ENCODE measurements at regions of chr10 and their contacts with region 1.

Region 1: GRCh38 chr10:52627279-52627678 is 145.3 kb downstream of the MBL2 start:
- DNase-seq: no peak
- H3K4me3 ChIP-seq: no peak overlapping the region
- CTCF ChIP-seq: no peak

Region 2: DNA sequence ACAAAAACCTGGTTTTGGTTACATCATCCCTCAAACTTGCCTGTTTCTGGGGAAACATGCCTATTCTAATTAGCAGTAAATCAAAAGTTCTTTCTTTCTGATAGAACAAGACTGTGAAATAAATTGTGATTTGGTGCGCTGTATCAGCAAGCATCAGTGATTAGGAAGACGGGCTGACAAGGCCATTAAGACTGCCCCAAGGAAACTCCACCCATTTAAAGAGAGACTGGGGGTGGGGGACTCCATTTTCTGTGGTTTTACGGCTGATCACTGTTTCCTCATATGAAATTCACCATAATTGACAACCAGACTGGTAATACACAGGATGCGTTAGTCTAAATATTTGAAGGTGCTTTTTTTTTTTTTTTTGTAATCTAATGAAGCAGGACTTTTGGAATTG is 76.6 kb after region 1 on chr10:
- in situ Hi-C with region 1: loop called (anchors 5 kb)
- DNase-seq: no peak
- H3K4me3 ChIP-seq: no peak overlapping the region
- CTCF ChIP-seq: no peak